PC-3 (cell line): ENCODE measurements at regions of chr14 and their contacts with region 1.

Region 1: GRCh38 chr14:61925043-61925442 is 162.8 kb downstream of the SNAPC1 start:
- DNase-seq: peak; percentile 74
- ATAC-seq: no peak; the same call in 1 of the 2 replicates
- H3K4me3 ChIP-seq: no peak overlapping the region
- H3K27ac ChIP-seq: peak overlapping the region; percentile 96
- H3K4me1 ChIP-seq: peaks cover 58% of the 10 kb centered on the region
- H3K27me3 ChIP-seq: no peaks in the 10 kb centered on the region
- CTCF ChIP-seq: peak; percentile 78

Region 2: DNA sequence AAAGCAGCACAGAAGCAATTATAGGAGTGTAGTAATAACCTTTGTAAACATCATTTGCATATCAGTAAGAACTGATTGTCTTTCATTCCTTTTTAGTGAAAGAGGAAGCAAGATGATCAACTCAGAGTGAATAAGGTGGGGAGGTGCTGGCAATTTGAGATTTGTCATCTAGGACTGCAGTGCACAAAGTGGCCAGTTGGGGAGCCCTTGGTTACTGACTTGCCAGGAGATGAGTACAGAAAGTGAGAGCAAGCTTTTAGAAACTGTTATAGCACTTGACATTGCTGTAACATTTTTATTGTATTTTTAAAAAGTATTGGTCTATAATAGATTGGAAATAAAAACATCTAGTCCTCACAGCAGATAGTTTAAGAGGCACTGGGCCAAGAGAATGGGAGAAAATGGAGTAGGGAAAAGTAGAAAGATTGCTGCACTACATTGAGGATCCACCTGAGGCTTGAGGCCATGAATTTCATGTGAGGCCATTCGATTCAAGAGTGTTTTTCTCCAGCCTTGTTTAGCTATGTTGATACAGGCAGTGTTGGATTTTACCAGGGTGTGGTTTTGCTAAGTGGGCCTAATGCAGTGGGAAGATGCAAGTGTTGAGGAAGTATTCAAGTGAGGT is 64.6 kb before region 1 on chr14:
- CTCF ChIA-PET with region 1: interaction called, 3 read pairs
- POLR2A ChIA-PET with region 1: interaction called, 4 read pairs
- intact Hi-C with region 1: loop called (anchors 2 kb)
- DNase-seq: peak; percentile 85
- ATAC-seq: peak; percentile 90
- H3K4me3 ChIP-seq: no peak overlapping the region
- H3K27ac ChIP-seq: no peak overlapping the region
- H3K4me1 ChIP-seq: no peaks in the 10 kb centered on the region
- H3K27me3 ChIP-seq: no peaks in the 10 kb centered on the region
- CTCF ChIP-seq: peak; percentile 95

Region 3: DNA sequence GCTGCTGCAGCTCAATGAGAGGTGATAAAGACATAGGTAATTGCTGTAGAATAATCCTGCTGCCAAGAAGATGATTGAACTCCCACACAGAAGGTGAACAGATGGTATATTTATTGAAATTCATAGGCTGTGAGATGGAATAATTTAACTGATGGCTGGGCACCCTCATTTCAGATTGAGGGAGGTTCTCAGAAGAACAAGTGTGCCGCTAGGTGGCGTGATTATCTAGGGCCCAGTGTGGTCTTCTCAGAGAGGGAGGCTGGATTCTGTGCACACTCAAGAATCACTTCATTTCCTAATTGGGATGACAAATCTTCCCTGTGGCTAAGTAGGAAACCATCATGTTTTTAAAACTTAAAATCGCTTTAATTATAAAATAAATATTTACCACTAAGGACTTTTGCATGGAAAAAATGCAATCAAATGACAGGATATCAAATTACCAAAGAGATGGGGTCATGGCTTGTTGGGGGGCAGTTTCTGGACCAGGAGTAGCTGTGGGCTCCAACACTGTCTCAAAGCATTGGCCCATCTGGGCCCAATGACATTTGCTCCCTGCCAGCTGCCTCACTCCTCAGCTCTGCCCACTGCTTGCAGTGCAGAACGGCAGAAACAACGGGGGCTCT is 30.5 kb before region 1 on chr14:
- CTCF ChIA-PET with region 1: no interaction called
- POLR2A ChIA-PET with region 1: no interaction called
- intact Hi-C with region 1: loop called (anchors 1 kb)
- DNase-seq: peak; percentile 90
- ATAC-seq: peak; percentile 68
- H3K4me3 ChIP-seq: no peak overlapping the region
- H3K27ac ChIP-seq: no peak overlapping the region
- H3K4me1 ChIP-seq: peaks cover 21% of the 10 kb centered on the region
- H3K27me3 ChIP-seq: no peaks in the 10 kb centered on the region
- CTCF ChIP-seq: peak; percentile 96

Region 4: DNA sequence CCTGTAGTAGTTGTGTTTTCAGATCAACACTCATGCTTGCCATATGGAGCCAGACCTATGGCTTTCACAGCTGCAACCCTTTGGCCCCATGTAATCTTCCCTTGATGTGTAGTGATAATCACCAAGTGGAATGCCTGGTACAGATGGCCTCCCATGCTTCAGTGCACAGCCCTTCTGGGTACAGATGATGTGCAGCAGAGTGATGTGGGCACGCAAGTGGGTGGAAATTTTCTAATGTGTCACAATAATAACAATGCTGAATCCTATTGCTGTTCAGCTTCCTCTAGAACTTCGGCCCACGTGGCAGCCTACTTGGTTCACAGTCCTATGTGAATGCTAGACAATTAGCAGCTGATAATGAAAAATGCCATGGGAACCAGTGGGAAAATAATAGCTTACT is 25.3 kb after region 1 on chr14:
- CTCF ChIA-PET with region 1: no interaction called
- POLR2A ChIA-PET with region 1: no interaction called
- intact Hi-C with region 1: no loop called
- DNase-seq: no peak
- ATAC-seq: no peak
- H3K4me3 ChIP-seq: no peak overlapping the region
- H3K27ac ChIP-seq: no peak overlapping the region
- H3K4me1 ChIP-seq: no peaks in the 10 kb centered on the region
- H3K27me3 ChIP-seq: no peaks in the 10 kb centered on the region
- CTCF ChIP-seq: no peak

Region 5: DNA sequence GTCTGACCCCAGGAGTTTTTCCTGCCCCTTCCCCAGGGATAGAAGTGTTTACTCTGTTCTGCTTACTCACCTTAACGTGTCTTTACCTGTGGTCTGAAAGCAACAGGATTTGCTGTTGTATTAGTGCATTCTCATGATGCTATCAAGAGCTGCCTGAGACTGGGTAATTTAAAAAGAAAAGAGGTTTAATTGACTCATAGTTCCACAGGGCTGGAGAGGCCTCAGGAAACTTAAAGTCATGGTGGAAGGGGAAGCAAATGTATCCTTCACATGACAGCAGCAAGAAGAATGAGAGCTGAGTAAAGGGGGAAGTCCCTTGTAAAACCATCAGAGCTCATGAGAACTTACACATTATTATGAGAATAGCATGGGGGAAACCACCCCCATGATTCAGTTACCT is 77.6 kb after region 1 on chr14:
- CTCF ChIA-PET with region 1: no interaction called
- POLR2A ChIA-PET with region 1: no interaction called
- intact Hi-C with region 1: loop called (anchors 1 kb)
- DNase-seq: peak; percentile 86
- ATAC-seq: peak; percentile 48
- H3K4me3 ChIP-seq: peak overlapping the region; percentile 55
- H3K27ac ChIP-seq: peak overlapping the region; percentile 98
- H3K4me1 ChIP-seq: peaks cover 31% of the 10 kb centered on the region
- H3K27me3 ChIP-seq: no peaks in the 10 kb centered on the region
- CTCF ChIP-seq: no peak

Region 6: GRCh38 chr14:62126879-62127478 is 201.9 kb after region 1 on chr14:
- CTCF ChIA-PET with region 1: interaction called, 54 read pairs
- POLR2A ChIA-PET with region 1: interaction called, 3 read pairs
- intact Hi-C with region 1: loop called (anchors 1 kb)
- DNase-seq: peak; percentile 85
- ATAC-seq: peak; percentile 88
- H3K4me3 ChIP-seq: no peak overlapping the region
- H3K27ac ChIP-seq: peak overlapping the region; percentile 15; the same call in 1 of the 2 replicates
- H3K4me1 ChIP-seq: peaks cover 5% of the 10 kb centered on the region; the same call in 1 of the 2 replicates
- H3K27me3 ChIP-seq: no peaks in the 10 kb centered on the region
- CTCF ChIP-seq: peak; percentile 94

Region 7: DNA sequence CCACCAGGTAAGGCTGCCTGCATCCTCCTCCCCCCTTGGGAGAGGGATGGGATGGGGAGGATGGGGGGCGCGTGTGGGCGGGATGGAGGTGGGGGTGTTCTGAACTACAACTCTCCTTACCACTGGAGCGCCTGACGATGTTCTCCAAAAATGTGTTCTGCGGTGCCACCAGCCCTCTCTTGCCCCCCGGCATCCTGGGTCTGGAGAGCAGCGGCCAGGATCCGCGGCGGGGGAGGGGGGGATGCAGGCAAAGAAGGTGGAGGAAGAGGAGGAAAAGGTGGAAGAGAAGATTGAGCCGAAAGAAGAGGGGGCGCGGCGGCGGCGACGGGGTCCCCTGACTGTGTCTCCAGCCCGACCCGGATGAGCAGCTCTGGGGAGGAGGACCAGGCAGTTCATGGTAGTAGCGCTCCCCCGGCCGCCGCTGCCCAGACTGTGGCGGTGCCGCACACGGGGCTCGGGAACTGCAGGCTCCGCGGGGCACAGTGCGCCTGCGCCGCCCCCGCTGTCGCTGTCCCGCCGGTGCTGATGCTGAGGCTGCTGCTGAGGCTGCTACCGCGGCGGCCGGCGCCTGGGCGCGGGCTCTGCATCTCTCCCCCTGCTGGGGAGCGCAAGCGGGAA is 1120.1 kb after region 1 on chr14 and contains the start of gene KCNH5:
- CTCF ChIA-PET with region 1: no interaction called
- POLR2A ChIA-PET with region 1: no interaction called
- intact Hi-C with region 1: loop called (anchors 10 kb)
- DNase-seq: peak; percentile 22
- ATAC-seq: peak; percentile 82
- H3K4me3 ChIP-seq: peak within 1 kb of the TSS; percentile 53
- H3K27ac ChIP-seq: no peak within 1 kb of the TSS
- H3K4me1 ChIP-seq: peaks cover 5% of the 10 kb centered on the region; the same call in 1 of the 2 replicates
- H3K27me3 ChIP-seq: peaks cover 82% of the 10 kb centered on the region
- CTCF ChIP-seq: no peak
- total RNA-seq, gene KCNH5: not detected in 2 replicates